ENCODE measurements at regions of chr14 and their contacts with region 1.

Region 1: DNA sequence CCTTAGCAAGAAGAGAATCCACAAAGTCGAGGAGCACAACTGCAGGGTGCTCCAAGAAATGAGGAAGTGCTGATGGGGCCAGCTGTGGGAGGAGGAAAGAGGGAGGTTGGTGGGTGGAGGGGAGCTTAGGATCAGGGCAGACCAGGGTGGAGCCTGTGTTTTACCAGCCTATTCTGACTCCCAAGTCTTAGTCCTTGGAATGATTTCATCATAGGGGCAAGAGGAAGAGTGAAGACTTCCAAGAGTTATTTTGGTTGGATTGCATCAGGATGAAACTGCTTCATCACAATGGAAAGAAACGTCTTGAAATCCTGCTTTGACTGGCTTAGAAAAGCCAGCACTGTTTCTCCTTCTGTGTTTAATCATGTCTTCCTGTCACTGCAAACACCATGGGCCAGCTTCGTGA is 194.0 kb downstream of the DPF3 start:
- H3K4me3 Mint-ChIP-seq: no peak overlapping the region
- H3K27ac Mint-ChIP-seq: peak overlapping the region; percentile 70
- H3K4me1 Mint-ChIP-seq: peaks cover 62% of the 10 kb centered on the region
- H3K27me3 Mint-ChIP-seq: peaks cover 6% of the 10 kb centered on the region

Region 2: GRCh38 chr14:72523424-72524294 is 176.2 kb before region 1 on chr14:
- intact Hi-C with region 1: loop called (anchors 10 kb)
- H3K4me3 Mint-ChIP-seq: no peak overlapping the region
- H3K27ac Mint-ChIP-seq: no peak overlapping the region
- H3K4me1 Mint-ChIP-seq: peaks cover 75% of the 10 kb centered on the region
- H3K27me3 Mint-ChIP-seq: peaks cover 37% of the 10 kb centered on the region

Region 3: DNA sequence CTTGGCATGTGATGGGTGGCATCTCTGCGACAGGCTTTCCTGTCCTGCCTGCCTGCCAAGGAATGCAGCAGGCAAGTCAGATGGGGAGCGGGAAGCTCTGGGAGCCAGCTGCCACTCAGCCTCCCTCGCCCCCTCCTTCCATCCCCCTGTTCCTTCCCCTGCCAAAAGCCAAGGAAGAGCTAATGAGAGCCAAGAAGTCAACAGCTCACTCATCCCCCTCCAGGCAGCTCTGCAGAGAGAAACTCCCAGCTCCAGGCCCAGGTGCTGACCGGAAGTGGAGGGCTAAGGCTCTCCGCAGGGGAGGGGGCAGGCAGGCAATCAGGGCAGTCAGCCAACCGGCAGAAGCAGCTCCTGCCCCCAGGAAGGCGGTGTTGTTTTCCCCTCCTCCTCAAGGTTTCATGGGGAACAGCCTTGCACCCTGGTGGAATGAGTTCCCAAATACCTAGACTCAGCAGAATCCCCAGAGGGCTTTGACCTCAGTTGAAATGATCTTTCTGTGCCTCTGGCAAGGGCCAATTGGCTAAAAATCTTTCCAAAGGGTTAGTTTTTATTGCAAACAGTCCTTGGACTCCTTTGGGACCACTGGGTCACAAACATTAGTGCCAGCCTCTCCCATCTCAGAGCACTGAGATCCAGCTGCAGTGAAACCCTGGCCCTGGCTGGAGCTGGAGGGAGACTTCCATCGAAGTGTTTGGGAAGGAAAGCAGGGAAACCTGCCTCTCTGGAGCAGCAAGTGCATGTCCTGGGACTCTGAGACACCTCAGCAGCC is 155.1 kb before region 1 on chr14:
- intact Hi-C with region 1: loop called (anchors 10 kb)
- H3K4me3 Mint-ChIP-seq: no peak overlapping the region
- H3K27ac Mint-ChIP-seq: no peak overlapping the region
- H3K4me1 Mint-ChIP-seq: peaks cover 37% of the 10 kb centered on the region
- H3K27me3 Mint-ChIP-seq: peaks cover 63% of the 10 kb centered on the region

Region 4: DNA sequence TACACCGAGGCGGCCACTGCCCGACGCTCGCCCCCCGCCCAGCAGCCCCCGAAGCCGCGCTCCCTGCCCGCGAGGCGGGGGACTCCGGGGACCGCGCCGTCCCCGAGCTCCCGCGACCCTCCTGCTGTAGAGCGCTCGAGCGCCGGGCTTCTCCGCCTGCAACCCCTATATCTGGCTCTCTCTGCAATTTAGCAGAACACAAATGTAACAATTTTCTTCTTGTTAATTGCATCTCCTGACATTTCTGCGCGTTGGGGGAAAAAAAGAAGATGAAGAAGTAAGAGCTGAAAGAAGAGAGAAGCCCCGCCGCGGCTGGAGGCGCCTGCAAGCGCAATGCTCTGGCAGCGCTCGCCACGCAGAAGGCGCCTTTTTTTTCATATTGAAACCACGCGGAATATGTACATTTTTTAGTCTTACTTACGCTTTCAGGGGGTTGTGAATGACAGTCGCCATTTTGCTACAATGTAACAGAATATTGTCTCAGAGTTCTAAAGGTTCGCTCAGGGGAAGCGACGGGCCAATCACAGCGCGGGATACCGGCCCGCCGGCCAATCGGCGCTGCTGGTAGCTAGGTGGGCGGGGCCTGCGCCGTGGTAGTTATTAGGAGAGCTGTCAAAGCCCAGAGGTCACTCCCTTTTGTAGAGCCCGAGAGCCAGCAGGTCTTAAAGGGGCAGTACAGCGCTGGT is 193.9 kb after region 1 on chr14 and contains the start of gene DPF3:
- intact Hi-C with region 1: loop called (anchors 10 kb)
- H3K4me3 Mint-ChIP-seq: peak within 1 kb of the TSS; percentile 81
- H3K27ac Mint-ChIP-seq: peak within 1 kb of the TSS; percentile 42
- H3K4me1 Mint-ChIP-seq: peaks cover 35% of the 10 kb centered on the region
- H3K27me3 Mint-ChIP-seq: peaks cover 81% of the 10 kb centered on the region